Activated CD4-positive, alpha-beta memory T cell treated with anti-CD3 and anti-CD28 coated beads for 36 hours (primary cell): ENCODE measurements at regions of chrX and their contacts with region 1.

Region 1: GRCh38 chrX:130060122-130061069 is 49.9 kb downstream of the ELF4 start:
- DNase-seq: peak; percentile 88
- H3K4me3 Mint-ChIP-seq: peak overlapping the region; percentile 73
- H3K27ac Mint-ChIP-seq: peak overlapping the region; percentile 60
- H3K4me1 Mint-ChIP-seq: peaks cover 6% of the 10 kb centered on the region
- H3K27me3 Mint-ChIP-seq: no peaks in the 10 kb centered on the region

Region 2: DNA sequence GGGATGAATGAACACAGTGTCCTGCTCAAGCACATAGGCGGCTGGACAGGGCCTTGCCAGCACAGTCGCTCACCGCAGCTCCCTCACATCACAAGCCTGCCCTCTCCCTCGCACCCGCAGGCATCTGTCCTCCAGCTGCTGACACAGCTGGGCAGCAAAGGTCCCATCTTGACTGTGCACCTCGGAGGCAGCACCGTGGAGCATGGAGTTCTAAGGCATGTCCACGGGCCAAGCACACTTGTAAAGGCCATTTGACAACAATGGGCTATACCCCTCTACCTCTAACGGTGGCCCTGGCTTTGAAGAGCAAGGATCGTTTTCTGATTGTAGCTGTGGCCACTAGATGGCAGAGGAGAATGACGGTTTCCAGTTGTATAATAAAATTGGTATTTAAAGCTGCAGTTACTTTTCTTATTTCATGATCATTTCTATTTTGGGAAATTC is 459.4 kb before region 1 on chrX:
- CTCF ChIA-PET with region 1: interaction called, 16 read pairs
- POLR2A ChIA-PET with region 1: no interaction called
- intact Hi-C with region 1: no loop called
- DNase-seq: peak; percentile 18
- H3K4me3 Mint-ChIP-seq: no peak overlapping the region
- H3K27ac Mint-ChIP-seq: no peak overlapping the region
- H3K4me1 Mint-ChIP-seq: peaks cover 14% of the 10 kb centered on the region
- H3K27me3 Mint-ChIP-seq: no peaks in the 10 kb centered on the region

Region 3: DNA sequence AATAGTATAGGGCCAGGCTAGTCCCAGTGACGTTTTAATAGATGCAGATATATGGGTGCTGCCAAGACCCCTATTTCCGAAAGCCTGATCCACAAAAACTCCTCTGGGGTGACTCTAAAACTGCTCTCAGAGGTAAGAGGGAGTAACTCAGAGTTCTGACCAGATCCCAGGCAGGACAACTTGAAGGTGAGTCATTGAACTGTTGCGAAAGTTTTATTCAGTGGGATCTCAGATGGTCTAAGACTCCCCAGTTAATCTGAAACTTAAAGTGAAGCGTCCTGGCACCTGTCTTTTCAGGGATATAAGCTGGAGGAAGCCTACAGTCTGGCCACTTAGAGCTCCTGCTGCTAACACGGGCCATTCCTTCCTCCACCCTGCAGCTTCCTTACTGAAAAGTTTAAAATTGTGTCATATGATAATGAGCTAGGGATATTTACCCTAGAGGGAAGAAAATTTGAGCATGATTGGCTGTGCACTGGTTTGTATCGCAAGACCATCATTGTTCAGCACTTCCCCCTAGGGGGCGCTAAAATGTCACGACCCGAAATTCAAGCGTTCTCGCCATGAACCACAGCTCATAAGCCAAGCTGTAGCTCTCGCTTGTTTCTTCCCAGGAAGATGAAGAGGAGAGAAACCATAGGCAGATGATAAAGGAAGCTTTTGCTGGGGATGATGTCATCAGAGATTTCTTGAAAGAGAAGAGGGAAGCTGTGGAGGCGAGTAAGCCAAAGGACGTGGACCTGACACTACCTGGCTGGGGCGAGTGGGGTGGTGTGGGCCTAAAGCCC is 134.9 kb before region 1 on chrX:
- CTCF ChIA-PET with region 1: interaction called, 27 read pairs
- POLR2A ChIA-PET with region 1: interaction called, 3 read pairs
- intact Hi-C with region 1: loop called (anchors 1 kb)
- DNase-seq: peak; percentile 76
- H3K4me3 Mint-ChIP-seq: no peak overlapping the region
- H3K27ac Mint-ChIP-seq: no peak overlapping the region
- H3K4me1 Mint-ChIP-seq: peaks cover 4% of the 10 kb centered on the region
- H3K27me3 Mint-ChIP-seq: no peaks in the 10 kb centered on the region

Region 4: GRCh38 chrX:129931411-129932015 is 128.9 kb before region 1 on chrX:
- CTCF ChIA-PET with region 1: interaction called, 27 read pairs
- POLR2A ChIA-PET with region 1: no interaction called
- intact Hi-C with region 1: loop called (anchors 2 kb)
- DNase-seq: peak; percentile 81
- H3K4me3 Mint-ChIP-seq: peak overlapping the region; percentile 74
- H3K27ac Mint-ChIP-seq: peak overlapping the region; percentile 80
- H3K4me1 Mint-ChIP-seq: peaks cover 3% of the 10 kb centered on the region
- H3K27me3 Mint-ChIP-seq: peaks cover 3% of the 10 kb centered on the region

Region 5: DNA sequence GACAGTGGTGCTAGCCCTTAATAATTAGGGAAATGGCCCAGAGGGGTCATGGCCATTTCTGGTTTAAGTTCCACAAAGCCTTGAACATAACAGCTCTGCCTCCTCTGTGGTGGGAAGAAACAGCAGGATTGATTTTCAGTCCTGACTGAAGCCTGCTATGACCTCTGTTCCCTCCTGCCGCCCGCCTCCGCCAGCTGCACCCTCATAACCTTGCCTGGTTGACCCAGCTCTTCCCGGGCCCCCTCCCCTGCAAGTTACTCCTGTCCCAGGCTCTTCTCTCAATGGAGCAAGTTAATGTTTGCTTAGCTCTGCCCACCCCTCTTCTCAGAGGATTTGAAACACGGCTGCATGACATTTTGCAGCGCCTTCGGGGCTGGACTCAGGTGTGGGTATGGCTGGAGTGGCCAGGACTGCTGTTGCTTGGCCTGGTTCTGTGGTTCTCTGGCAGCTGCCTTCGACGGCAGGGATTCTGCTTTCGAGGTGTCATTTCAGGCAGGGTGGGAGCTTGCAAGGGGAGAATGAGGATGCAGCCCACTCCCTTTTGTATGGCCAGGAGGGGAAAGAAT is 50.7 kb before region 1 on chrX:
- CTCF ChIA-PET with region 1: interaction called, 3 read pairs
- POLR2A ChIA-PET with region 1: no interaction called
- intact Hi-C with region 1: loop called (anchors 10 kb)
- DNase-seq: no peak
- H3K4me3 Mint-ChIP-seq: no peak overlapping the region
- H3K27ac Mint-ChIP-seq: no peak overlapping the region
- H3K4me1 Mint-ChIP-seq: no peaks in the 10 kb centered on the region
- H3K27me3 Mint-ChIP-seq: no peaks in the 10 kb centered on the region

Region 6: DNA sequence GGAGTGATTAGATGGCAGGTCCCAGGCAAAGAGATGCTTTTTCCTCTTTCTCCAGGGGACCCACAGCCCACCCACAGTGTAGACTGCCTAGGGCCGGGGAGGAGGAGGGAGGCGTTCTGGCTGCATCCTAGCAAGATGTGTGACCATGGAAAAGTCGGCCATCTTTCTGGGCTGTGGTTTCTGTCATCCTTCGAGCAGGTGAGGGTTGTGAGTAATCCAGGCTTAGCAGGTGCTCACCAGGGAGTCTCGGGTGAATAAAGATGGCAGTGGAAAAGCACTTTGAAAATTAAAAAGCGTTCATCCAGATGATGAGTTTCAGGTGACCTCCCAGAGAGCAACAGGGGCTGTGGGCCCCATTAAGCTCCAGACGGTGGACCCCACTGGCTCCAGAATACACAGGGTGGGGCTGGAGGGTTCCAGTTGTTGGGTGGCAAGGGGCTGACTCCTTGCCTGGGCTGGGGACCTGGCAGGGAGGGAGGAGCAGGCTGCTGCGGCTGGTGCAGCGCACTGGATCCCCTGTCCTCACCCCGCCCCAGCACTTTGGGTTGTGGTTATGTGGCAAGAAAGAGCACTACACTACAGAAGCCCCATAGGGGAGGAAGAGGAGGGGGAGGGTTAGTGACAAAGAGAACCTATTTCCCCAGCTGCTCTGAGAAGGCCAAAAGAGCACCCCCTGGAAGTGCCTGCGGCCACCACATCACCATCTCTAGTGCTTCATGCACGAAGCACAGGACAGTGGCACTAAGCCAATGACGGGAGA is 26.2 kb after region 1 on chrX:
- CTCF ChIA-PET with region 1: no interaction called
- POLR2A ChIA-PET with region 1: no interaction called
- intact Hi-C with region 1: no loop called
- DNase-seq: peak; percentile 82
- H3K4me3 Mint-ChIP-seq: peak overlapping the region; percentile 51
- H3K27ac Mint-ChIP-seq: peak overlapping the region; percentile 90
- H3K4me1 Mint-ChIP-seq: peaks cover 69% of the 10 kb centered on the region
- H3K27me3 Mint-ChIP-seq: no peaks in the 10 kb centered on the region